ENCODE measurements at regions of chr18 and their contacts with region 1.

Region 1: DNA sequence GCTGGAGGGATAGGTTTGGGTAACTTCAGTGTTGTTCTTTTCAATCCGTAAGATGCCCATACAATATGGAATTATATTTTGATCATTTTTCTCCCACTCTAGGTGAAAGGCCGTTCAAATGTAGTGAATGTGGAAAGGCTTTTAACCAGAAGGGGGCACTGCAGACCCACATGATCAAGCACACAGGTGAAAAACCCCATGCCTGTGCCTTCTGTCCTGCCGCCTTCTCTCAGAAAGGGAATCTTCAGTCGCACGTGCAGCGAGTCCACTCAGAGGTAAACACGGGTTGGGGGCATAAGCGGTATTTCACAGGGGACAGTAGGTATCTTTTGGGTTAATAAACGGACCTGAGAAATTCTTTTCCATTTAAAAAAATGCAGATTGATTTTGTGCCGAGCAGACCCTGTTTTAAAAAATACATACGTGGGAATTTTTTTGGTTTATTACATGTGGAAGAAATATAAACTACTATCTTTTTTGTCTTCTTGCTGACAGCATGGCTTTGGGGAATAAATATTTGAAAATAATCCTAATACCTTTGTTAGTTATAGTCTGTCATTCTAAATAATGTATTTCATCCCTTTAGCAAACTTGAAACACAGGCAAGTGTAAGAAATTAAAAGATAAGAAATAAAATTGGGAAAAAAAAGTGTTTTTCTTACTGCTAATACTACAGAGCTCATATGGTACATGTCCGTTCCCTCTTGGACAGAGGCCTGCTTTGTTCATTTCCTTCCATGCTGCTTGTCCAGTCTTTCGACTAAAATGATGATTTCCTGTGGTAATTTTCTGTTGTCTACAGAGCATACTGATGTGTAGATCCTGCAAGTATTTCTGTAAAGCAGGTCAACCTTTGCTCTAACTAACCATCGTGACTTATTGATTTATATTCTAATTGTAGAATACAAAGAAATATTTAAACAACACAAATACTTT is 53.3 kb downstream of the ZNF236 start:
- DNase-seq: peak; percentile 28
- ATAC-seq: peak; percentile 92
- H3K4me3 ChIP-seq: no peak overlapping the region
- H3K27ac ChIP-seq: no peak overlapping the region
- H3K4me1 ChIP-seq: 0 out of 4 replicates have a peak, but pooled peaks cover 0 to 3% of the 10 kb centered on the region in 2 experiments
- H3K27me3 ChIP-seq: no peaks in the 10 kb centered on the region
- CTCF ChIP-seq: peak; percentile 48 to 86 (median 82); a peak in 5 of 6 replicates
- POLR2A ChIP-seq: no peak
- RAD21 ChIP-seq: peak; percentile 67

Region 2: DNA sequence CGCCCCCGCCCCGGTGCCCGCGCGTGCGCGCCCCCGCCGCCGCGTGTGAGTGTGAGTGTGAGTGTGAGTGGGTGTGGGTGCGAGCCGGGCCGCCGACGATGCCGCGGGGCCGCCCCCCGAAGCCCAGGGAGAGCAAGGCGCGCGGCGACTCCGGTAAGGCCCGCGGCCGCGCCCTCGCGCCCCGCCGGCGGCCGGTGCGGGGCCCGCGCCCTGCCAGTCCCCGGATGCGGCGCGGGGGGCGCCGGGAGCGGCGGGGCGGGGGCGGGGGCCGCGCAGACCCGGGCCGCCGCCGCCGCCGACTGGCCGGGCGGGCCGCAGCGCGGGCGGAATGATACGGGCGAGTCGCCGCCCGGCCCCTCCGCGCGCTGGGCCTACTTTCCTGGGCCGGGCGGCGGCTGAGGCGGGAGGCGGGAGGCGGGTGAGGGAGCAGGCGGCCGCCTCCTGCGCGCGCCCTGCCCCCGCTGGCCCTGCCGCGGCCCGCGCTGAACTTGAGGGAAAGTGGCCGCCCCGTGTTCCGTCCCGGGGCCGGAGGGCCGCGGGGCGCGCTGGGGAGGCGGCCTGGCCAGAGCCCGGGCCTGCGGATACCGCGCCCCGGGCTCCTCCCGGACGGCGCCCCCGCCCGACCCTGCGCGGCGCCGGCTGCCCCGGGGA is 53.0 kb before region 1 on chr18 and contains the start of gene ZNF236:
- CTCF ChIA-PET with region 1: no interaction called
- POLR2A ChIA-PET with region 1: no interaction called
- RAD21 ChIA-PET with region 1: no interaction called
- intact Hi-C with region 1: loop called (anchors 5 kb)
- DNase-seq: no peak
- ATAC-seq: peak; percentile 51
- H3K4me3 ChIP-seq: peak within 1 kb of the TSS; percentile 83 to 92
- H3K27ac ChIP-seq: peak within 1 kb of the TSS; percentile 97
- H3K4me1 ChIP-seq: peaks cover 11 to 40% of the 10 kb centered on the region in 2 experiments
- H3K27me3 ChIP-seq: no peaks in the 10 kb centered on the region
- CTCF ChIP-seq: no peak
- POLR2A ChIP-seq: peak; percentile 45
- RAD21 ChIP-seq: no peak
- total RNA-seq, gene ZNF236: 15.0 TPM

Region 3: GRCh38 chr18:76982841-76983587 is 107.4 kb after region 1 on chr18:
- CTCF ChIA-PET with region 1: no interaction called
- POLR2A ChIA-PET with region 1: no interaction called
- RAD21 ChIA-PET with region 1: no interaction called
- intact Hi-C with region 1: loop called (anchors 1 kb)
- DNase-seq: peak; percentile 67
- ATAC-seq: peak; percentile 99
- H3K4me3 ChIP-seq: no peak overlapping the region
- H3K27ac ChIP-seq: no peak overlapping the region
- H3K4me1 ChIP-seq: peaks cover 2 to 5% of the 10 kb centered on the region in 2 experiments; a peak in 3 of 4 replicates
- H3K27me3 ChIP-seq: no peaks in the 10 kb centered on the region
- CTCF ChIP-seq: peak; percentile 83 to 93 (median 87)
- POLR2A ChIP-seq: no peak
- RAD21 ChIP-seq: peak; percentile 77

Region 4: GRCh38 chr18:77114415-77115191 is 238.9 kb after region 1 on chr18:
- CTCF ChIA-PET with region 1: no interaction called
- POLR2A ChIA-PET with region 1: no interaction called
- RAD21 ChIA-PET with region 1: no interaction called
- intact Hi-C with region 1: no loop called
- DNase-seq: no peak
- ATAC-seq: no peak
- H3K4me3 ChIP-seq: no peak overlapping the region
- H3K27ac ChIP-seq: no peak overlapping the region; the same call in 1 of the 2 replicates
- H3K4me1 ChIP-seq: peaks cover 6 to 21% of the 10 kb centered on the region in 2 experiments; a peak in 2 of 4 replicates
- H3K27me3 ChIP-seq: no peaks in the 10 kb centered on the region
- CTCF ChIP-seq: no peak
- POLR2A ChIP-seq: no peak
- RAD21 ChIP-seq: no peak

Measured in HCT116 (cell line).